Natural killer cell (primary cell): ENCODE measurements at regions of chr16 and their contacts with region 1.

Region 1: GRCh38 chr16:81366316-81366932 is 51.7 kb downstream of the GAN start:
- DNase-seq: peak in 1 of 2 donors; percentile 75
- ATAC-seq: peak; percentile 82 to 88 (median 85)
- H3K4me3 ChIP-seq: no peak overlapping the region
- H3K4me3 Mint-ChIP-seq: no peak overlapping the region
- H3K27ac ChIP-seq: no peak overlapping the region
- H3K27ac Mint-ChIP-seq: no peak overlapping the region
- H3K4me1 ChIP-seq: peaks cover 9% of the 10 kb centered on the region
- H3K4me1 Mint-ChIP-seq: peaks cover 14 to 15% of the 10 kb centered on the region in 2 donors
- H3K27me3 ChIP-seq: no peaks in the 10 kb centered on the region
- H3K27me3 Mint-ChIP-seq: no peaks in the 10 kb centered on the region
- CTCF ChIP-seq: peak; percentile 77

Region 2: GRCh38 chr16:81181013-81181720 is 185.3 kb before region 1 on chr16:
- intact Hi-C with region 1: no loop called
- DNase-seq: no peak
- ATAC-seq: no peak
- H3K4me3 ChIP-seq: no peak overlapping the region
- H3K4me3 Mint-ChIP-seq: no peak overlapping the region
- H3K27ac ChIP-seq: no peak overlapping the region
- H3K27ac Mint-ChIP-seq: no peak overlapping the region
- H3K4me1 ChIP-seq: no peaks in the 10 kb centered on the region
- H3K4me1 Mint-ChIP-seq: no peaks in the 10 kb centered on the region
- H3K27me3 ChIP-seq: no peaks in the 10 kb centered on the region
- H3K27me3 Mint-ChIP-seq: peaks cover 8% of the 10 kb centered on the region in 2 donors
- CTCF ChIP-seq: no peak

Region 3: DNA sequence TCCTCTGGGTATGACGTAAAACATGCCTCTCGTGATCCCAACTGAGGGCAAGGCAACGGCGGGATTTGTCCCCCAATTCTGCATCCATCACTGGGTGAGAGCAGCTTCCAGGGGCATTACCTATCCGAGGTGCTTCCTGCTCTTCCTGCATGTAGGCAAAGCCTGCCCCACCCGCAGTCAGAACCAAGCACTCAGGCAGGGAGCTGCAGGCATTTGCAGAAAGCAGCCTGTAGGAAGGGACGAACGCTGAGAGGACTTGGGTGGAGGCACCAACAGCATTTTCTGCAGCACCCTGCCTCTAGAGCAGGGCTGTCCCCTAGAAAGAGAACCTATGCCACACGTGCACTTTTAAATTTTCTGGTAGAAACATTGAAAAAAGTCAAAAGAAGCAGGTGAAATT is 122.5 kb before region 1 on chr16:
- intact Hi-C with region 1: no loop called
- DNase-seq: no peak
- ATAC-seq: no peak
- H3K4me3 ChIP-seq: no peak overlapping the region
- H3K4me3 Mint-ChIP-seq: no peak overlapping the region
- H3K27ac ChIP-seq: no peak overlapping the region
- H3K27ac Mint-ChIP-seq: no peak overlapping the region
- H3K4me1 ChIP-seq: no peaks in the 10 kb centered on the region
- H3K4me1 Mint-ChIP-seq: no peaks in the 10 kb centered on the region
- H3K27me3 ChIP-seq: no peaks in the 10 kb centered on the region
- H3K27me3 Mint-ChIP-seq: peaks cover 4 to 6% of the 10 kb centered on the region in 2 donors
- CTCF ChIP-seq: no peak

Region 4: DNA sequence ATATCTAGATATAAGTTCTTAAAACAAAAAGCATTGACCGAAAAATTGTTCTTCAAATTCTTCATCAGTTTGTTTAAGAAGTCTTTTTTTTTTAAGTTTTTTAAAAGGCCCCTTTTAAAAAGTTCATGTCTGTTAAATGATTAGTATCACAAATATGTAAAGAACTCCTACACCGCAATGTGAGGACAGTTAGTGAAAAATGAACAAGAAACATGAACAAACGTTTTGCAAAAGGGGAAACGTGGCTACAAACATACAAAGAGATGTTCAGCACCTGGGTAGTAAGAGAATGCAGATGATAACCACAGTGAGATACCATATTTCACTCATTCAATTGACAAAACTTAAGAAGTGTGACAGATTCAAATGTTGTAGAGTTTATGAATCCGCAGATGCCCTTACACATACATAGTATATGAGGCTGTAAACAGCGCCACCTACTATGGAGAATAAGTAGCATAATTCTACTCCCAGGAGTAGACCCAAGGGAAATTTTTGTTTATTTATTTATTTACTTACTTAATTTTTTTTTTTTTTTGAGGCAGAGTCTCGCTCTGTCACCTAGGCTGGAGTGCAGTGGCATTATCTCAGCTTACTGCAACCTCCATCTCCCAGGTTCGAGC is 16.3 kb before region 1 on chr16:
- intact Hi-C with region 1: no loop called
- DNase-seq: no peak
- ATAC-seq: no peak
- H3K4me3 ChIP-seq: no peak overlapping the region
- H3K4me3 Mint-ChIP-seq: no peak overlapping the region
- H3K27ac ChIP-seq: no peak overlapping the region
- H3K27ac Mint-ChIP-seq: no peak overlapping the region
- H3K4me1 ChIP-seq: no peaks in the 10 kb centered on the region
- H3K4me1 Mint-ChIP-seq: peaks cover 0 to 8% of the 10 kb centered on the region in 2 donors
- H3K27me3 ChIP-seq: no peaks in the 10 kb centered on the region
- H3K27me3 Mint-ChIP-seq: no peaks in the 10 kb centered on the region
- CTCF ChIP-seq: no peak

Region 5: DNA sequence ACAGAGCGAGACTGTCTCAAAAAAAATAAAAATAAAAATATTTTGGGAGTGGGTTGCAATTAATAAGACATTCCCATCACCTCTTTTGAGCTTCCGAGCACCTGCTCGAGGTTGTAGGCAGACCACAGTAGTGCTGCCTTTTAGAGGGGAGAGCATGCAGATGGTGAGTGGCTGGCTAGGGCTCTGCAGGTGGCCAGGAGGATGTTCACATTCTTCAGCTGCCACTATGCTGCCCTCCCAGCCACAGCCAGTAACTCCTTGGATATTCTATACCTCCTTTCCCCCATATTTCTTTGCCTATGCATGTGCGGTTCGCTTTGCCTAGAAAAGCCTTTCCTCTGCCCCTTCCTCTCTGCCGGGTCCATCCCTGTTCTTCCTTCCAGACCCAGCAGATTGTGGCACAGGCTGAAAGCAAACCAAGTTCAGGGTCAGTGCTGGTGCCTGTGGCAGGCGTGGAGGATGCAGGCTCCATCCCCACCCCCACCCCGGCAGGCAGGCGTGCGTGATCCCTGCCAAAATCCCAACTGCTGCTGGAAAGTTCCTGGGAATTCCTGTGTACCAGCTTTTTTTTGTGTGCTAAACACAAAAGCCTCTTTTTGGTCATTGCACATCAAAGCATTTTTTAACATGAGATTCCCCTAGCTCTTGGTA is 44.3 kb after region 1 on chr16:
- intact Hi-C with region 1: no loop called
- DNase-seq: no peak
- ATAC-seq: no peak
- H3K4me3 ChIP-seq: no peak overlapping the region
- H3K4me3 Mint-ChIP-seq: no peak overlapping the region
- H3K27ac ChIP-seq: no peak overlapping the region
- H3K27ac Mint-ChIP-seq: no peak overlapping the region
- H3K4me1 ChIP-seq: no peaks in the 10 kb centered on the region
- H3K4me1 Mint-ChIP-seq: no peaks in the 10 kb centered on the region
- H3K27me3 ChIP-seq: no peaks in the 10 kb centered on the region
- H3K27me3 Mint-ChIP-seq: no peaks in the 10 kb centered on the region
- CTCF ChIP-seq: no peak

Region 6: GRCh38 chr16:81623363-81624102 is 257.1 kb after region 1 on chr16:
- intact Hi-C with region 1: loop called (anchors 5 kb)
- DNase-seq: peak; percentile 37 to 81
- ATAC-seq: peak; percentile 66 to 70 (median 69)
- H3K4me3 ChIP-seq: no peak overlapping the region
- H3K4me3 Mint-ChIP-seq: no peak overlapping the region
- H3K27ac ChIP-seq: no peak overlapping the region
- H3K27ac Mint-ChIP-seq: peak overlapping the region in 1 of 2 donors; percentile 56
- H3K4me1 ChIP-seq: peaks cover 8% of the 10 kb centered on the region
- H3K4me1 Mint-ChIP-seq: no peaks in the 10 kb centered on the region
- H3K27me3 ChIP-seq: no peaks in the 10 kb centered on the region
- H3K27me3 Mint-ChIP-seq: no peaks in the 10 kb centered on the region
- CTCF ChIP-seq: peak; percentile 64

Region 7: DNA sequence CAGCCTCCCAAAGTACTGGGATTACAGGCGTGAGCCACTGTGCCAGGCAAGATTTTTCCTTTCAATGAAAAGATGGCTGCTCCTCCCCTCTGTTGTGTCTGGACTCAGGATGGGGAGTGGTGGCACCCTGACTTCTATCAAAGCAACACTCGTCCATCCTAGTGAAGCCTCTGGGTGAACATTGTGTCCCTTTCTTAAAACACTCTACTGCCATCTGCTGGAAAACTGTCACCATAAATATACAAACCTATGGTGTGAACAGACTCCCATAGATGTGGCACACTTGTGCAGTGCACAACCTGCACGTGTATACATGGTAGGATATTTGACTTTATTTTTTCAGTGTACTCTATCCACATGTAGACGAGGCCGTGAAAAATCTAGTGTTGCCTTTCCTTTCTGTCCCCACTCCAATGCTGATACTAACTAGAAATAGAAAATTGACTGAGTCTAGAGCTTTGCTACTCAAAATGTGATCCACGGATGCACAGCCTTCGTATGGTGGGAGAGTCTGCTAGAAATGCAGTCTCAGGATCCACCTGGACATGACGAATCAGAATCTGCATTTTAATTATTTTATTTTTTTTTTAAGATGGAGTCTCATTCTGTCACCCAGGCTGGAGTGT is 356.8 kb after region 1 on chr16:
- intact Hi-C with region 1: loop called (anchors 1 kb)
- DNase-seq: peak in 1 of 2 donors; percentile 88
- ATAC-seq: peak; percentile 83 to 86 (median 85)
- H3K4me3 ChIP-seq: no peak overlapping the region
- H3K4me3 Mint-ChIP-seq: no peak overlapping the region
- H3K27ac ChIP-seq: no peak overlapping the region
- H3K27ac Mint-ChIP-seq: no peak overlapping the region
- H3K4me1 ChIP-seq: peaks cover 14% of the 10 kb centered on the region
- H3K4me1 Mint-ChIP-seq: peaks cover 0 to 17% of the 10 kb centered on the region in 2 donors
- H3K27me3 ChIP-seq: no peaks in the 10 kb centered on the region
- H3K27me3 Mint-ChIP-seq: no peaks in the 10 kb centered on the region
- CTCF ChIP-seq: peak; percentile 74

Region 8: DNA sequence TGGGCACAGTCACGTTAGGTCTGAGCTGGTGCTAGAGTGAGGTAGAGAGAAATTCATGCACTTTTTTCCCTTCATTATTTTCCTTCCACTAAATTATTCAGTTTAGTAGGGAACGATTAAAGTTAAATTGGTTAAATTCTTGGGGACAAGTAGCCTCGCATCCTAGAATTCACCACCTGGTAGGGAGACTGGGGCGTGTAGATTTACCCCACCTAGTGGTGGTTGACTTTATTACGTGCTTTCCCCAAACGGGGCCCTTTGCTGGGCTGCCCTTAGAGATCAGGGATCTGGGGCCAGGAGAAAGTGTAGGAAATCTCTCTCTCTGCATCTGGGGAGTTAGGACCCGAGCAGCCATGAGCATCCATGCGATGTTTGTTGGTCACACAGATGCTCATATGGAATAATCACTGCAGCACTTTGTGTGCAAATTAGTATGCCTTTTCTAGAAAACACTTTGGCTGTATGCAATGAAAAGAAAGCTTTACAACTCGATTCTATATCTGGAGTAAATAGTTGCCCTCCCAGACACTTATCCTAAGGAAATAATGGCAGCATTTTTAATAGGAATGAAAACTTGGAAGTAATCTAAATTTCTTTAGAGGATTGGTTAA is 519.7 kb after region 1 on chr16:
- intact Hi-C with region 1: loop called (anchors 5 kb)
- DNase-seq: peak in 1 of 2 donors; percentile 52
- ATAC-seq: peak; percentile 62 to 77 (median 73)
- H3K4me3 ChIP-seq: no peak overlapping the region
- H3K4me3 Mint-ChIP-seq: no peak overlapping the region
- H3K27ac ChIP-seq: no peak overlapping the region
- H3K27ac Mint-ChIP-seq: peak overlapping the region in 1 of 2 donors; percentile 0
- H3K4me1 ChIP-seq: no peaks in the 10 kb centered on the region
- H3K4me1 Mint-ChIP-seq: peaks cover 8 to 10% of the 10 kb centered on the region in 2 donors
- H3K27me3 ChIP-seq: no peaks in the 10 kb centered on the region
- H3K27me3 Mint-ChIP-seq: no peaks in the 10 kb centered on the region
- CTCF ChIP-seq: peak; percentile 84